PC-9 (cell line): ENCODE measurements at regions of chr17 and their contacts with region 1.

Region 1: GRCh38 chr17:42183741-42184711 is 1.2 kb downstream of the HCRT start:
- DNase-seq: peak in 1 of 2 experiments; percentile 37
- H3K4me3 ChIP-seq: no peak overlapping the region; the same call in 1 of the 2 replicates
- H3K27ac ChIP-seq: no peak overlapping the region
- H3K4me1 ChIP-seq: peaks cover 19% of the 10 kb centered on the region; the same call in 1 of the 2 replicates
- H3K27me3 ChIP-seq: peaks cover 10% of the 10 kb centered on the region
- CTCF ChIP-seq: peak; percentile 49; the same call in 1 of the 2 replicates

Region 2: GRCh38 chr17:41864836-41865595 is 319.0 kb before region 1 on chr17 and contains the start of gene KLHL11:
- CTCF ChIA-PET with region 1: no interaction called
- POLR2A ChIA-PET with region 1: no interaction called
- intact Hi-C with region 1: no loop called
- DNase-seq: peak; percentile 66 to 84
- H3K4me3 ChIP-seq: peak within 1 kb of the TSS; percentile 87
- H3K27ac ChIP-seq: peak within 1 kb of the TSS; percentile 44
- H3K4me1 ChIP-seq: peaks cover 16% of the 10 kb centered on the region
- H3K27me3 ChIP-seq: no peaks in the 10 kb centered on the region
- CTCF ChIP-seq: no peak
- total RNA-seq, gene KLHL11: 13.3 and 14.5 TPM in 2 replicates

Region 3: GRCh38 chr17:42171831-42172230 is 12.2 kb before region 1 on chr17:
- CTCF ChIA-PET with region 1: interaction called, 11 read pairs
- POLR2A ChIA-PET with region 1: no interaction called
- intact Hi-C with region 1: no loop called
- DNase-seq: no peak
- H3K4me3 ChIP-seq: no peak overlapping the region
- H3K27ac ChIP-seq: no peak overlapping the region
- H3K4me1 ChIP-seq: no peaks in the 10 kb centered on the region
- H3K27me3 ChIP-seq: peaks cover 54% of the 10 kb centered on the region
- CTCF ChIP-seq: no peak

Region 4: GRCh38 chr17:42251115-42251514 is 67.1 kb after region 1 on chr17:
- CTCF ChIA-PET with region 1: interaction called, 10 read pairs
- POLR2A ChIA-PET with region 1: no interaction called
- intact Hi-C with region 1: no loop called
- DNase-seq: no peak
- H3K4me3 ChIP-seq: no peak overlapping the region
- H3K27ac ChIP-seq: no peak overlapping the region
- H3K4me1 ChIP-seq: peaks cover 50% of the 10 kb centered on the region
- H3K27me3 ChIP-seq: no peaks in the 10 kb centered on the region
- CTCF ChIP-seq: peak; percentile 36; the same call in 1 of the 2 replicates

Region 5: GRCh38 chr17:42642336-42642735 is 458.3 kb after region 1 on chr17:
- CTCF ChIA-PET with region 1: no interaction called
- POLR2A ChIA-PET with region 1: no interaction called
- intact Hi-C with region 1: no loop called
- DNase-seq: no peak
- H3K4me3 ChIP-seq: no peak overlapping the region
- H3K27ac ChIP-seq: no peak overlapping the region
- H3K4me1 ChIP-seq: no peaks in the 10 kb centered on the region
- H3K27me3 ChIP-seq: no peaks in the 10 kb centered on the region
- CTCF ChIP-seq: no peak